K562 (cell line): ENCODE measurements at regions of chr13 and their contacts with region 1.

Region 1: DNA sequence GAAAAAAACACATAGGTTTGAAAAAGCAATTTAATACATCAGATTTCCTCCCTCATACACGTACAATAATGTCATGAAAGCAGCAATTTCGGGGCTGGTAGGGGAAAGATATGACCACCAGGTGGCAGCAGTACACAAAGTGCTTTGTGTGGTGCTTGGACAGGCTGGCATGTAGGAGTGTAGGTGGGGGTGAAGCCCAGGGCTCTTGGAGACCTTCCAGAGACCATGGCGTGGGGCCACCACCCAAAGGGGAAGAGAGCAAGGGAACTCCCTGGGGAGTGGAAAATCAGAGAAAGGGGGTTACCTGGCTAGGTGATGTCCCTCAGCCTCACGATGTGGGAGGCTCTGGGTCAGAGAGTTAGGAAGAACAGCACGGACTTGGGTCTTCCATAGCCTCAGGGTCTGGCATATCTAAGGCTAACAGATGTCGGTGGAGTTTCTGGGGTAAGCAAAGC is 11.8 kb upstream of the CCNA1 start:
- DNase-seq: peak; percentile 51 to 64 (median 58)
- ATAC-seq: peak; percentile 95
- H3K4me3 ChIP-seq: no peak overlapping the region
- H3K27ac ChIP-seq: no peak overlapping the region
- H3K4me1 ChIP-seq: no peaks in the 10 kb centered on the region
- H3K27me3 ChIP-seq: no peaks in the 10 kb centered on the region
- CTCF ChIP-seq: peak; percentile 59 to 72 (median 72)
- EP300 ChIP-seq: no peak
- POLR2A ChIP-seq: no peak
- RAD21 ChIP-seq: peak; percentile 47 to 72

Region 2: GRCh38 chr13:35978603-35979316 is 441.7 kb before region 1 on chr13:
- CTCF ChIA-PET with region 1: no interaction called
- POLR2A ChIA-PET with region 1: no interaction called
- in situ Hi-C with region 1: loop called (anchors 25 kb)
- intact Hi-C with region 1: no loop called
- DNase-seq: peak; percentile 25 to 47 (median 34)
- ATAC-seq: peak; percentile 65; the same call in 2 of the 3 replicates
- H3K4me3 ChIP-seq: no peak overlapping the region
- H3K27ac ChIP-seq: no peak overlapping the region
- H3K4me1 ChIP-seq: no peaks in the 10 kb centered on the region
- H3K27me3 ChIP-seq: no peaks in the 10 kb centered on the region
- CTCF ChIP-seq: peak; percentile 18 to 65 (median 50); a peak in 5 of 6 replicates
- EP300 ChIP-seq: no peak
- POLR2A ChIP-seq: no peak
- RAD21 ChIP-seq: peak; percentile 73 to 78

Region 3: GRCh38 chr13:36282818-36283445 is 137.5 kb before region 1 on chr13:
- CTCF ChIA-PET with region 1: no interaction called
- POLR2A ChIA-PET with region 1: no interaction called
- in situ Hi-C with region 1: no loop called
- intact Hi-C with region 1: loop called (anchors 10 kb)
- DNase-seq: peak in 3 of 4 experiments; percentile 9 to 25 (median 14)
- ATAC-seq: peak; percentile 69
- H3K4me3 ChIP-seq: no peak overlapping the region
- H3K27ac ChIP-seq: no peak overlapping the region
- H3K4me1 ChIP-seq: no peaks in the 10 kb centered on the region
- H3K27me3 ChIP-seq: no peaks in the 10 kb centered on the region
- CTCF ChIP-seq: peak; percentile 46 to 71 (median 48); a peak in 4 of 6 replicates
- EP300 ChIP-seq: no peak
- POLR2A ChIP-seq: no peak
- RAD21 ChIP-seq: peak; percentile 66 to 74

Region 4: GRCh38 chr13:36639610-36640009 is 219.1 kb after region 1 on chr13:
- CTCF ChIA-PET with region 1: no interaction called
- POLR2A ChIA-PET with region 1: no interaction called
- in situ Hi-C with region 1: no loop called
- intact Hi-C with region 1: no loop called
- DNase-seq: no peak
- ATAC-seq: no peak
- H3K4me3 ChIP-seq: no peak overlapping the region
- H3K27ac ChIP-seq: no peak overlapping the region
- H3K4me1 ChIP-seq: no peaks in the 10 kb centered on the region
- H3K27me3 ChIP-seq: no peaks in the 10 kb centered on the region
- CTCF ChIP-seq: no peak
- EP300 ChIP-seq: no peak
- POLR2A ChIP-seq: no peak
- RAD21 ChIP-seq: no peak

Region 5: GRCh38 chr13:36736119-36736726 is 315.8 kb after region 1 on chr13:
- CTCF ChIA-PET with region 1: no interaction called
- POLR2A ChIA-PET with region 1: no interaction called
- in situ Hi-C with region 1: no loop called
- intact Hi-C with region 1: loop called (anchors 2 kb)
- DNase-seq: peak; percentile 30 to 57 (median 36)
- ATAC-seq: no peak
- H3K4me3 ChIP-seq: no peak overlapping the region
- H3K27ac ChIP-seq: no peak overlapping the region
- H3K4me1 ChIP-seq: no peaks in the 10 kb centered on the region
- H3K27me3 ChIP-seq: no peaks in the 10 kb centered on the region
- CTCF ChIP-seq: peak; percentile 37 to 64 (median 40); a peak in 4 of 6 replicates
- EP300 ChIP-seq: no peak
- POLR2A ChIP-seq: no peak
- RAD21 ChIP-seq: peak; percentile 33 to 46; a peak in 2 of 4 replicates

Region 6: GRCh38 chr13:36848199-36848982 is 427.9 kb after region 1 on chr13:
- CTCF ChIA-PET with region 1: interaction called, 3 read pairs
- POLR2A ChIA-PET with region 1: no interaction called
- in situ Hi-C with region 1: loop called (anchors 25 kb)
- intact Hi-C with region 1: loop called (anchors 10 kb)
- DNase-seq: peak in 2 of 4 experiments; percentile 12 to 48
- ATAC-seq: peak; percentile 91
- H3K4me3 ChIP-seq: no peak overlapping the region
- H3K27ac ChIP-seq: no peak overlapping the region
- H3K4me1 ChIP-seq: no peaks in the 10 kb centered on the region; a peak in 1 of 5 replicates
- H3K27me3 ChIP-seq: peaks cover 0 to 2% of the 10 kb centered on the region in 2 experiments; a peak in 3 of 5 replicates
- CTCF ChIP-seq: peak; percentile 38 to 56 (median 44); a peak in 5 of 6 replicates
- EP300 ChIP-seq: no peak
- POLR2A ChIP-seq: no peak
- RAD21 ChIP-seq: peak in 1 of 2 experiments; percentile 53; a peak in 2 of 4 replicates

Region 7: DNA sequence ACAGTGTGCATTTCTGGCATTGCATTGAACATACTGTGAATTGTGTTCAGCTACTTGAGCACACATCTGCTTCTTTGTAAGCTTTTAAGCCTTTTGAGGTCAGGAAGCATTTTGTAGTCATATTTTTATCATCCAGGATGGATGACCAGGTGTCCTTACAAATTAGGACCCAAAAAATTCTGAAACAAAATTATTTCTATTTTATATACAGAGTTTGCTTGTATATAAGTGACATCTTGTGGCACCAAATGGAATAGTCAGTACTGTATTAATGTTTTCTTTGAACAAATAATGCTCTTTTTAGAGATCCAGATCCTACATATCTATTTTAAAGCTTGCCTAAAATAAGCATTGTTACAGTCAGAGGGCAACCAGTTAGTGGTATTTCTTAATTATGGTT is 648.5 kb after region 1 on chr13:
- CTCF ChIA-PET with region 1: no interaction called
- POLR2A ChIA-PET with region 1: no interaction called
- in situ Hi-C with region 1: no loop called
- intact Hi-C with region 1: loop called (anchors 5 kb)
- DNase-seq: peak in 1 of 4 experiments; percentile 4
- ATAC-seq: peak; percentile 59
- H3K4me3 ChIP-seq: no peak overlapping the region
- H3K27ac ChIP-seq: no peak overlapping the region
- H3K4me1 ChIP-seq: peaks cover 0 to 9% of the 10 kb centered on the region in 2 experiments; a peak in 2 of 5 replicates
- H3K27me3 ChIP-seq: peaks cover 0 to 19% of the 10 kb centered on the region in 2 experiments; a peak in 2 of 5 replicates
- CTCF ChIP-seq: peak in 2 of 3 experiments; percentile 19 to 53; a peak in 3 of 6 replicates
- EP300 ChIP-seq: no peak
- POLR2A ChIP-seq: no peak
- RAD21 ChIP-seq: peak; percentile 36 to 59